Dendritic cell treated with granulocyte-macrophage colony-stimulating factor and Interleukin-4, amounts not matched to agents 40 ng/mL and 50 ng/mL, for 4 days (primary cell): ENCODE measurements at regions of chr1 and their contacts with region 1.

Region 1: DNA sequence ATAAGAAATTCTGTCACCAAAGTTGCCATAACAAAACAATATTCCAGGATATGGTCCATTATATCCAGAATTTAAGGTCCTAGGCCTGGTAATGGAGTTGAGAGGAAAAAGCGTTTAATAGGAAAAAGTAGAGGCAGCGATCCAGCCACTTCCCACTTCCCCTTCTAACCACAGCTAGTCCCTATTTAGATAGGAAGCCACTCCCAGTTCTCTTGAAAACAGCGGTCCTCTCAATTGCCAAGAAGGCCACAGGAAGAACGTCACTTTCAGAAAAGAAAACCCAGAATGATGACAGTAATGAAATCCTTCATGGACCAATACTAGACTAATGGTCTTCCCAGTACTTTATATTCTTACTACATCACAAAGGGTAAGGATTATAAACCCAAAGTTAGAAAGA is 38.6 kb downstream of the ABL2 start:
- H3K4me3 Mint-ChIP-seq: no peak overlapping the region
- H3K27ac Mint-ChIP-seq: peak overlapping the region; percentile 78
- H3K4me1 Mint-ChIP-seq: peaks cover 74% of the 10 kb centered on the region
- H3K27me3 Mint-ChIP-seq: no peaks in the 10 kb centered on the region

Region 2: DNA sequence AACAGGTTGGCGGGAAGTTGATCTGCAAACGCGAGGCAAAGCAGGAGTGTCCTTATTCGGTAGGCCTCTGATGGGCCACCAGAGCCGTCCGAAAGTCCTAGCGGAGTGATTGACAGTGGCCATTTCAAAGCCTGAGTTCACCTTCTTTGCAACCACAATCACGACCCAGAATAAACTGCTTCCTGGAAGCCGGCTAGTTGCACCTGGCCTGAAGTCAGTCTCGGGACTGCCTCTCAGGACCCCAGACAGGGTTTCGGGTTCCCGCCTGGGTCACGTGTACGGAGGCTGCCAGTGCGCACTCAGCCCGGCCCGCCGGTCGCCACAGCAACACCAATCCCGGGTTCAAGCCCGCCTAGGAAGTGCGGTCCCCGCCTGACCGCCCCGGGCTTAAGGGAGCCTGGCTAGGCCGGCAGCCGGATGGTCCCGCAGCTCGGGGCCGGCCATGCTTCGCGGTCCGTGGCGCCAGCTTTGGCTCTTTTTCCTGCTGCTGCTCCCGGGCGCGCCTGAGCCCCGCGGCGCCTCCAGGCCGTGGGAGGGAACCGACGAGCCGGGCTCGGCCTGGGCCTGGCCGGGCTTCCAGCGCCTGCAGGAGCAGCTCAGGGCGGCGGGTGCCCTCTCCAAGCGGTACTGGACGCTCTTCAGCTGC is 109.1 kb before region 1 on chr1 and contains the start of gene TOR3A:
- intact Hi-C with region 1: loop called (anchors 5 kb)
- H3K4me3 Mint-ChIP-seq: peak within 1 kb of the TSS; percentile 92
- H3K27ac Mint-ChIP-seq: peak within 1 kb of the TSS; percentile 89
- H3K4me1 Mint-ChIP-seq: peaks cover 41% of the 10 kb centered on the region
- H3K27me3 Mint-ChIP-seq: no peaks in the 10 kb centered on the region

Region 3: DNA sequence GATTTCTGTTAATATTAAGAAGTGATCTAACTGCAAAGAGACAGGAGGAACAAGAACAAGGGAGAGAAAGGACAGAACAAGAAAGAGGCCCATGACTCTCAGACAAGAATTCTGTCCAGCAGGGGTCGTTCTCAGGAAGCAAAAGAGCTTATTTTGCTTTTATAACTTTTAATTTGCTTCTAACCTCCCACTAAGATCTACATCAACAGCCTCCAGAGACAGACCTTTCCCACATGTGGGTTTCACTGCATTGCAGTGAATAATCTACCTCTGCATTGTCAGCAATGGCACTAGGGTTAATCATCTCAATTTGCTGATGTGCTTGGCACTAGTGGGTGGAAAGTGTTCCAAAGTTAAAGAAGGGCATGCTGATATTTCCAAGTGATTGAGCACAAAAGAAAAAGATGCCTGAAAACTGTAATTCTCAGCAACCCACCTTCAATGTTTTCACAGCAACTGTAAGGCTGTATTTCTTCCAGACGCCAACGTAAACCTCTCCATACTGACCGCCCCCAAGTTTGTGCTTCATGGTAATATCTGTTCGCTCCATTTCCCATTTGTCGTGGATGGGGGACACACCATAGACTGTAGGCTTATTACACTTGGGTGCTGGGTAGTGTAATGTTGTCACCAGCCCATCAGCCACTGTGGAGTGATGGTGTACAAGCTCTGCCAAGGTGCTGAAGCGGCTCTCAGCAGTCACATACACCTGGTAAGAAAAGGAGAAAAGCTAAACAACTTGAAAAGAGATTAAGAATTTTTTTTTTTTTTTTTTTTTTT is 69.5 kb before region 1 on chr1:
- intact Hi-C with region 1: loop called (anchors 5 kb)
- H3K4me3 Mint-ChIP-seq: no peak overlapping the region
- H3K27ac Mint-ChIP-seq: no peak overlapping the region
- H3K4me1 Mint-ChIP-seq: peaks cover 12% of the 10 kb centered on the region
- H3K27me3 Mint-ChIP-seq: no peaks in the 10 kb centered on the region

Region 4: GRCh38 chr1:179142889-179143299 is 48.0 kb before region 1 on chr1:
- intact Hi-C with region 1: loop called (anchors 5 kb)
- H3K4me3 Mint-ChIP-seq: peak overlapping the region; percentile 72
- H3K27ac Mint-ChIP-seq: peak overlapping the region; percentile 91
- H3K4me1 Mint-ChIP-seq: peaks cover 46% of the 10 kb centered on the region
- H3K27me3 Mint-ChIP-seq: no peaks in the 10 kb centered on the region

Region 5: GRCh38 chr1:179175011-179175841 is 15.6 kb before region 1 on chr1:
- intact Hi-C with region 1: loop called (anchors 2 kb)
- H3K4me3 Mint-ChIP-seq: no peak overlapping the region
- H3K27ac Mint-ChIP-seq: peak overlapping the region; percentile 70
- H3K4me1 Mint-ChIP-seq: peaks cover 23% of the 10 kb centered on the region
- H3K27me3 Mint-ChIP-seq: no peaks in the 10 kb centered on the region

Region 6: GRCh38 chr1:179229214-179230140 is 38.6 kb after region 1 on chr1 and contains the start of gene ABL2:
- intact Hi-C with region 1: loop called (anchors 5 kb)
- H3K4me3 Mint-ChIP-seq: peak within 1 kb of the TSS; percentile 99
- H3K27ac Mint-ChIP-seq: peak within 1 kb of the TSS; percentile 86
- H3K4me1 Mint-ChIP-seq: peaks cover 53% of the 10 kb centered on the region
- H3K27me3 Mint-ChIP-seq: no peaks in the 10 kb centered on the region

Region 7: GRCh38 chr1:179293340-179294327 is 102.8 kb after region 1 on chr1 and contains the start of gene SOAT1:
- intact Hi-C with region 1: loop called (anchors 5 kb)
- H3K4me3 Mint-ChIP-seq: peak within 1 kb of the TSS; percentile 82
- H3K27ac Mint-ChIP-seq: peak within 1 kb of the TSS; percentile 80
- H3K4me1 Mint-ChIP-seq: peaks cover 68% of the 10 kb centered on the region
- H3K27me3 Mint-ChIP-seq: no peaks in the 10 kb centered on the region

Region 8: DNA sequence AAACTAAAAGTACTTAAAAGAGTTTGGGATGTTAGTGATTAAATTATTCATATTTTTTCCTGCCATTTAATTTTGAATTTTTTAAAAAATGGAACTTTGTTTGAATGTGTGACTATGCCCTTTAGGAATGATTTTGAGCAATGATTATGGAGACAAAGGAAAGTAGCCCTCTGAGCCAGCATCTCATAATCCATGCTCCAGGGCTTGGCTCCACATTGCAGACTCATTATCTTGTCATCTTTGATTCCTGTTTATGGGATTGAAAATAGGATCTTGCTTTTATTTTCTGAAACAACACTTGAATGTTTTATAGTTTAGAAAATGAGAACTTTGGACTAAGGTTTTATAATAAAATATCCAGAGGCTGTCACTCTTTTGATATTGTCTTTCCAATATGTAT is 189.4 kb after region 1 on chr1:
- intact Hi-C with region 1: no loop called
- H3K4me3 Mint-ChIP-seq: no peak overlapping the region
- H3K27ac Mint-ChIP-seq: no peak overlapping the region
- H3K4me1 Mint-ChIP-seq: no peaks in the 10 kb centered on the region
- H3K27me3 Mint-ChIP-seq: no peaks in the 10 kb centered on the region